GM18951 (cell line): ENCODE measurements at regions of chr4 and their contacts with region 1.

Region 1: DNA sequence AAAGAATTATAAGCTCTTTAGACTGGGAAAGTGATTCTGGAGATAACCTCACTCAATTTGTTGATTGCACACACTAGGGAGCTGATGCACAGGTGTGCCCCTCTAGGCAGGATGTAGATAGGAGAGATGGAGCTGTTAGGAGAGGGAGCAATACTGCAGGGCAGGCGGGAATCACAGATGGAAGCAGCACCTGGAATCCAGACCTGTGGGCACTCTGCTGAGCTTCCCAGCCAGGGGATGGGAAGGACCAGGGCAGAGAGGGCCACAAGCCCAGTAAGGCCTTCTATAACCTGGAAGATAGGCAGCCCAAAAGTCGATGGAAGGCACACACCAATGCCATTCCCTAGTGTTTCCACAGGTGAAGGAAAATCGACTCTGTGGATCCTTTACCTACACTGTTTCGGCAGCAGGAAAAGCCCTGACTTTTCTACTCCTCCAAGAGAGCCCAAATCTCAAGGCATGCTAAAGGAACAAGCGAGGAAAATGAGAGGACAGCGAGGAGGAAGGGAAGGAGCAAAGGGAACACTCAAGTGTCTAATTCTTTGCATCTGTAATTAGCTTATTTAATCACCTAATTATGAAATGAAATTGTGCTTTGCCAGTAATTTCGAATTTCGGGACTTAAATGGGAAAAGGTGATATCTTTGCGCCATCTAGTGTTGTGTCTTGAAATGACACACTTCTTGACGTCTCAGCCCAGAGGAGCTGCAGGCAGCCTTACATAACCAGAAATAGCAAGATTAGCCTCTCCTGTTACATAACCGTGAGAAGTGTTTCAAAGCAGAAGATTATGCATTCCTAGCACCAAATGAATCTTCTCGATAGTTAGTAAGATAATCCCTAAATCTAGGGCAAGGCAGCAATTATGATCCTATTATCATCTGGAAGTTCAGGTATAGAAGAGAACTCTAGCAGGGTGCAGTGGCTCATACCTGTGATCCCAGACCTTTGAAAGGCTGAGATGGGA is 31.0 kb upstream of the TLR3 start:
- POLR2A ChIP-seq: no peak

Region 2: GRCh38 chr4:185471235-185472102 is 566.5 kb before region 1 on chr4 and contains the start of gene CCDC110:
- in situ Hi-C with region 1: loop called (anchors 25 kb)
- POLR2A ChIP-seq: peak; percentile 41

Region 3: GRCh38 chr4:185488650-185489049 is 549.3 kb before region 1 on chr4:
- in situ Hi-C with region 1: no loop called
- POLR2A ChIP-seq: no peak

Region 4: GRCh38 chr4:186227221-186227620 is 189.2 kb after region 1 on chr4 and contains the start of gene KLKB1:
- in situ Hi-C with region 1: no loop called
- POLR2A ChIP-seq: no peak

Region 5: DNA sequence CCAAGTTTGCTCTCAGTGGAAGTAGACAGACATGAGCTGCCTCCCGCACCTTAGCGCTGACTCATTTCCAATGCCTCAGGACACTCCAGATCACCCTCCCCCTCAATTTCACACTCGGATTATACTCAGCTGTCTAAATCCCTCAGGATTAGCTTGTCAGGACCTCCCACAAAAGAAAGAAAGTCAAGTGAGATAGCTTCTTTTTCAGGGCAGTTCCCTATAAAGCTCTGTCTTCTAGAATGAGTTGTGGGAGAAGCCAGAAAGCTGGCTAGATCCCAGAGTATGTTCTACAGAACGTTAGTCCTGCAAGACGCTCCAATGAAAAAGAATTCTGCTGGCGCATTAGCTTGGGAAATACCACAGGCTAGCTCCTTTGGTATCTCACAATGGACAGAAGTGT is 568.6 kb after region 1 on chr4:
- in situ Hi-C with region 1: no loop called
- POLR2A ChIP-seq: no peak